Naive thymus-derived CD8-positive, alpha-beta T cell (primary cell): ENCODE measurements at regions of chr7 and their contacts with region 1.

Region 1: GRCh38 chr7:151631968-151632749 is 112.5 kb upstream of the RHEB start:
- DNase-seq: peak; percentile 81 to 90 (median 87)
- ATAC-seq: peak; percentile 84 to 85
- H3K4me3 Mint-ChIP-seq: peak overlapping the region; percentile 93 to 99 (median 96)
- H3K27ac Mint-ChIP-seq: peak overlapping the region; percentile 85 to 99 (median 96)
- H3K4me1 Mint-ChIP-seq: peaks cover 17 to 39% (median 36%) of the 10 kb centered on the region in 4 donors
- H3K27me3 Mint-ChIP-seq: no peaks in the 10 kb centered on the region

Region 2: GRCh38 chr7:151291206-151291605 is 341.0 kb before region 1 on chr7:
- POLR2A ChIA-PET with region 1: no interaction called
- DNase-seq: no peak
- ATAC-seq: no peak
- H3K4me3 Mint-ChIP-seq: no peak overlapping the region
- H3K27ac Mint-ChIP-seq: no peak overlapping the region
- H3K4me1 Mint-ChIP-seq: no peaks in the 10 kb centered on the region
- H3K27me3 Mint-ChIP-seq: peaks cover 0 to 3% (median 2%) of the 10 kb centered on the region in 5 donors

Region 3: DNA sequence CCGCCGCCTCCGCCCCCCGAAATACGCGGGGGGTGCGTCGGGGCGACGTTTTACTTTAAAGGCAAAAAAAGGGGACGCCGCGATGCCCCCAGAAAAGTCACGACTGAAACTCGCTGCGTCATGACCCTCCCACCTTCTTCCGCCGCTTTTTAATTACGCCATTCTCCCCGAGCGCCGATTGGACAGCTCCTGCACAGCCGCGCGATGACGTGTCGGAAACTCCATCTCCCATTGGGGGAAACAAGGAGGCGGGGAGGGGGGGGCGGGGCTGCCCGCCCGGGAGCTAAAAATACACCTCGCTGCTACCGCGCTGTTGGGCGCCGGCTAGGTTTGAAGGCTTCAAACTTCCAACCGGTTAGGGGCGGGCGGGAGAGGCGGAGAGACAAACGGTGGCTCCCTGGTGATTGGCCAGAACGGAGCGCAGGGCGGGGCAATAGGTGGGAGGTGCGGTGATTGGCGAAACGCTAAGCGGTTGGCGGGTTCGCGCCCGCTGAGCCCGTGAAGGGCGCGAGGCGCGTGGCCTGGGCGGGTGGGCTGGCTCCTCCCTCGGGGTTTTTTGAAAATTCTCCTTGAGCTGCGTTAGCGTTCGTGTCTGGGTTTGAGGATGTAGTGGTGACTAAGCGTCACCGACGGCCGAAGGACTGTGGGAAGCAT is 112.3 kb before region 1 on chr7 and contains the start of gene RHEB:
- POLR2A ChIA-PET with region 1: interaction called, 21 read pairs
- DNase-seq: peak; percentile 93 to 99 (median 98)
- ATAC-seq: peak; percentile 82 to 86
- H3K4me3 Mint-ChIP-seq: peak within 1 kb of the TSS; percentile 86 to 98 (median 94)
- H3K27ac Mint-ChIP-seq: peak within 1 kb of the TSS; percentile 95 to 99 (median 97)
- H3K4me1 Mint-ChIP-seq: peaks cover 24 to 46% (median 39%) of the 10 kb centered on the region in 4 donors
- H3K27me3 Mint-ChIP-seq: peaks cover 0 to 4% (median 0%) of the 10 kb centered on the region in 5 donors
- polyA plus RNA-seq, gene RHEB: 43.7 to 48.8 (median 48.6) TPM